Pancreas (tissue), 10 donors: ENCODE measurements at regions of chr12 and their contacts with region 1.

Region 1: GRCh38 chr12:46661110-46661845 is 164.5 kb downstream of the SLC38A4 start:
- DNase-seq: peak in 3 of 6 donors; percentile 12 to 29 (median 21)
- ATAC-seq: peak; percentile 91 to 98 (median 94)
- H3K4me3 ChIP-seq: no peak overlapping the region
- H3K27ac ChIP-seq: no peak overlapping the region
- H3K4me1 ChIP-seq: no peaks in the 10 kb centered on the region
- H3K27me3 ChIP-seq: no peaks in the 10 kb centered on the region
- CTCF ChIP-seq: peak; percentile 29 to 74 (median 58)

Region 2: GRCh38 chr12:46342562-46343033 is 318.7 kb before region 1 on chr12:
- intact Hi-C with region 1: loop called in 1 of 3 experiments (anchors 10 kb)
- DNase-seq: peak in 4 of 6 donors; percentile 12 to 52 (median 34)
- ATAC-seq: peak; percentile 82 to 95 (median 94)
- H3K4me3 ChIP-seq: no peak overlapping the region
- H3K27ac ChIP-seq: no peak overlapping the region
- H3K4me1 ChIP-seq: peaks cover 0 to 6% (median 0%) of the 10 kb centered on the region in 3 donors
- H3K27me3 ChIP-seq: no peaks in the 10 kb centered on the region
- CTCF ChIP-seq: peak in 3 of 4 donors; percentile 29 to 43 (median 42)

Region 3: DNA sequence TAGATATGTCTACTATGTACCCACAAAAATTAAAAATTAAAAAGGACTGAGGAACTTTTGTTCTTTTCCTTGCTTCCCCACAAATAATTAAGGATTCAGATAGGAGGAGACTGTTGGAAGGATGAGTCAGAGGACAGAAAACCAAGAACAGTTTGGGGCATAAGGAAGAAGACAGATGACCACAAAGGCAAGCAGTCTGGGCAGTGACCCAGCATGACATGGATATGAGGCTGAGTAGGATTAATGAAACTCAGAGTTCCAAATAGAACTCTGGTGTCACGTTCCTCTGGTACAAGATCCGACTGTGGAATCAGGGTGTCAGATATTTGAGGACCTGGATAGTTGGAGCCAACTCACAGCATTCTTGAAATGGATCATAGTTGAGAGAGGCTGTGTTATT is 253.8 kb after region 1 on chr12:
- intact Hi-C with region 1: no loop called
- DNase-seq: no peak
- ATAC-seq: peak in 2 of 4 donors; percentile 32 to 34
- H3K4me3 ChIP-seq: no peak overlapping the region
- H3K27ac ChIP-seq: no peak overlapping the region
- H3K4me1 ChIP-seq: no peaks in the 10 kb centered on the region
- H3K27me3 ChIP-seq: no peaks in the 10 kb centered on the region
- CTCF ChIP-seq: no peak